HEK293 (cell line): ENCODE measurements at regions of chr7 and their contacts with region 1.

Region 1: GRCh38 chr7:28362812-28363211 is 49.5 kb upstream of the CREB5 start:
- H3K4me3 ChIP-seq: no peak overlapping the region
- H3K27ac ChIP-seq: no peak overlapping the region
- H3K4me1 ChIP-seq: no peaks in the 10 kb centered on the region
- CTCF ChIP-seq: no peak

Region 2: DNA sequence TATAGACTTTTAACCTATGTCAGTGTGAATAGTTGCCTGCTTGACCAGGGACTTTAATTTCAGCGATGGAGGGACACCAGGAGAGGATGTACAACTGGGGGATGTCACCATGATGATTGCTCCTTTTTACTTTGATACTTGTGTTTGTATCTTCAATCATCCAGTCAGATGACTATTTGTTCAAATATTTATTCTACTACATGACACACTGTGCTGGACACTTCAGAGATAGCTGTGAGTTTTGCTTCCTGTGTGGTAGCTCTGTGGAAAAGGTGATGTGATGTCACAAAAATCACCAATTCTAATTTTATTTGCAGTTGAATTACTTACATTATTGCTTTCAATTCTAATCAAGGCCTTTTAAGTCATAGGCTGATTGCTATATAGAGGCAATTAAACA is 13.2 kb before region 1 on chr7:
- CTCF ChIA-PET with region 1: interaction called, 19 read pairs
- POLR2A ChIA-PET with region 1: no interaction called
- H3K4me3 ChIP-seq: no peak overlapping the region
- H3K27ac ChIP-seq: no peak overlapping the region
- H3K4me1 ChIP-seq: no peaks in the 10 kb centered on the region
- CTCF ChIP-seq: no peak